AG04450 (cell line): ENCODE measurements at regions of chr2 and their contacts with region 1.

Region 1: GRCh38 chr2:43226558-43226954 is at the start of gene ZFP36L2:
- DNase-seq: peak; percentile 83
- H3K4me3 ChIP-seq: peak within 1 kb of the TSS; percentile 87
- H3K27ac ChIP-seq: peak within 1 kb of the TSS; percentile 95
- H3K27me3 ChIP-seq: no peaks in the 10 kb centered on the region
- CTCF ChIP-seq: no peak
- polyA plus RNA-seq, gene ZFP36L2: 16.0 and 18.2 TPM in 2 replicates

Region 2: GRCh38 chr2:42859006-42859552 is 367.5 kb before region 1 on chr2:
- CTCF ChIA-PET with region 1: interaction called, 22 read pairs
- POLR2A ChIA-PET with region 1: no interaction called
- DNase-seq: peak; percentile 68
- H3K4me3 ChIP-seq: no peak overlapping the region
- H3K27ac ChIP-seq: no peak overlapping the region
- H3K27me3 ChIP-seq: peaks cover under 1% of the 10 kb centered on the region
- CTCF ChIP-seq: peak; percentile 95

Region 3: GRCh38 chr2:42964439-42965083 is 262.0 kb before region 1 on chr2:
- CTCF ChIA-PET with region 1: interaction called, 10 read pairs
- POLR2A ChIA-PET with region 1: interaction called, 21 read pairs
- DNase-seq: peak; percentile 90
- H3K4me3 ChIP-seq: no peak overlapping the region
- H3K27ac ChIP-seq: peak overlapping the region; percentile 90
- H3K27me3 ChIP-seq: no peaks in the 10 kb centered on the region
- CTCF ChIP-seq: no peak

Region 4: GRCh38 chr2:43239981-43240761 is 13.6 kb after region 1 on chr2:
- CTCF ChIA-PET with region 1: interaction called, 23 read pairs
- POLR2A ChIA-PET with region 1: interaction called, 3 read pairs
- DNase-seq: no peak
- H3K4me3 ChIP-seq: no peak overlapping the region
- H3K27ac ChIP-seq: no peak overlapping the region
- H3K27me3 ChIP-seq: no peaks in the 10 kb centered on the region
- CTCF ChIP-seq: peak; percentile 18

Region 5: DNA sequence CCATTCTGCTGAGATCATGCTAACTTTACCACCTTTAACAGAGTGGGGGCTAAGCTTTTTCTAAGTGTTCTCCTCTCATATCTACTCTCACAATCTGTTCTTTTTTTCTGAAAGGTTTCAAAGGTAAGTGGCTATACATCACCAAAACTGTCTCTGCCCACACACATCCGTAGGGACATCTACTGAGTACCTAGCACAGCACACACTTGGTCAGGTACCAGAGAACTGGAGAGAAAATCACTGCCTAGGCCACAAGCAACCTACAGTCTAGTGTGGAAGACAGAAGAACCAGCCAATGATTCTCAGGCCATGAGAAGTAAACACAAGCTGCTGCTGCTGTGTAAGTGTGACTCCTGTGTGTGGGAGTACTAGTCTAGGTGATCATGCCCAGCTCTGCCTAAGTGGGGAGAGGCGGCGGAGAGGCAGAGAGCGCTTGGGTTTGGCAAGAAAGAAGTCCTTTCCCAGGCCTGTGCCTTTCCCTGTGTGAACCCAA is 175.9 kb after region 1 on chr2:
- CTCF ChIA-PET with region 1: interaction called, 10 read pairs
- POLR2A ChIA-PET with region 1: no interaction called
- DNase-seq: no peak
- H3K4me3 ChIP-seq: no peak overlapping the region
- H3K27ac ChIP-seq: no peak overlapping the region
- H3K27me3 ChIP-seq: no peaks in the 10 kb centered on the region
- CTCF ChIP-seq: no peak

Region 6: DNA sequence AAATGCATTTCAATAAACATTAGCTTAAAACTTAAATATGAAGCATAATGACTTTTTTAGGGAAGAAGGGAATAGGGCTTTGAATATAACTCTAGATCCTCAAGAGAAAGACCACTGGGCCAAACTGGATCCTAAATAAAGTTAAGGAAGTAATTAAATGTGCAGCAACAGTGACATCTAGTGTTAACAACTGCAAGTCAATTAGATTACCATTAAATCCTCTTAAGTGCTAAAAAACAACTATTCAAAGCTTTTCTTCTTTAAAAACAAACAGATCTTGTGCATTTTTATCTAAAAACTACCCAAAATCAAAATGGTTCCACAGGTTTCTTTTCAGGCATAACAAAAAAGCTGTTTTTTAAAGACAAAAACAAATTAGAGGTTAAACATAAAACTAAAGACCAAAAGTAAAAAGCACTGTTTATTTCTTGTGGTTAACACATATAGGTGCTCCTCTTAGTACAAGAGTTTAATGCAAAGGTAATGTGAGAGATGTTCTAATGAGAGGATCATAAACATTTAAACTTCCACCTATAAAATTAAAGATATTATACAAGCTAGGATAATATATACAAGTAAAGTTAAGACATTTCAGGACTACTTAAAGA is 257.9 kb after region 1 on chr2:
- CTCF ChIA-PET with region 1: interaction called, 104 read pairs
- POLR2A ChIA-PET with region 1: interaction called, 5 read pairs
- DNase-seq: peak; percentile 61
- H3K4me3 ChIP-seq: no peak overlapping the region
- H3K27ac ChIP-seq: no peak overlapping the region
- H3K27me3 ChIP-seq: no peaks in the 10 kb centered on the region
- CTCF ChIP-seq: peak; percentile 51